ENCODE measurements at regions of chrX and their contacts with region 1.

Region 1: GRCh38 chrX:53616946-53617345 is 69.6 kb downstream of the HUWE1 start:
- DNase-seq: no peak
- H3K4me3 ChIP-seq: no peak overlapping the region
- H3K27ac ChIP-seq: no peak overlapping the region
- H3K4me1 ChIP-seq: no peaks in the 10 kb centered on the region
- CTCF ChIP-seq: no peak

Region 2: GRCh38 chrX:53563324-53563723 is 53.6 kb before region 1 on chrX:
- CTCF ChIA-PET with region 1: no interaction called
- POLR2A ChIA-PET with region 1: no interaction called
- intact Hi-C with region 1: loop called (anchors 10 kb)
- DNase-seq: no peak
- H3K4me3 ChIP-seq: no peak overlapping the region
- H3K27ac ChIP-seq: no peak overlapping the region
- H3K4me1 ChIP-seq: no peaks in the 10 kb centered on the region
- CTCF ChIP-seq: no peak